Calu3 (cell line): ENCODE measurements at regions of chr3 and their contacts with region 1.

Region 1: GRCh38 chr3:174440741-174441587 is 418.2 kb upstream of the NAALADL2 start:
- DNase-seq: peak; percentile 94
- H3K4me3 Mint-ChIP-seq: peak overlapping the region; percentile 80
- H3K27ac Mint-ChIP-seq: peak overlapping the region; percentile 62
- H3K4me1 Mint-ChIP-seq: peaks cover 20% of the 10 kb centered on the region
- H3K27me3 Mint-ChIP-seq: no peaks in the 10 kb centered on the region
- CTCF ChIP-seq: peak; percentile 18

Region 2: GRCh38 chr3:174547801-174548435 is 107.0 kb after region 1 on chr3:
- CTCF ChIA-PET with region 1: interaction called, 6 read pairs
- intact Hi-C with region 1: loop called (anchors 5 kb)
- DNase-seq: no peak
- H3K4me3 Mint-ChIP-seq: no peak overlapping the region
- H3K27ac Mint-ChIP-seq: no peak overlapping the region
- H3K4me1 Mint-ChIP-seq: peaks cover 17% of the 10 kb centered on the region
- H3K27me3 Mint-ChIP-seq: no peaks in the 10 kb centered on the region
- CTCF ChIP-seq: no peak

Region 3: DNA sequence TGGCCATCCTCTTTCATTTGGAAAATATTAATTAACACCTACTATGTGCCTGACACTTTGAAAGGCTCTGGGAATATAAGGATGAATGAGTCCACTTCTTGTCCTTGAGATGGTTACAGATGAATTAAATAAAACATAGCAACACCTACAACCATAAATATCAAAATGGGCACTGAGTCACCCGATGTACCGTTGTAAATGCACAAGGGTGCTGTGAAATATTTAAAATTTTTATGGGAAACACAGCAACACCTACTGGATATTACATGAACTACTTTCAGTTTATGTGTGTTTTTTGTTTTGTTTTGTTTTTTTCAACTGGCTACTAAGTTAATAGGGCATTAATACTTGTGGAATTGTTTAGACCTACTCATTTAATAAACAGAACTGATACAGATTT is 179.2 kb after region 1 on chr3:
- CTCF ChIA-PET with region 1: no interaction called
- intact Hi-C with region 1: loop called (anchors 2 kb)
- DNase-seq: no peak
- H3K4me3 Mint-ChIP-seq: no peak overlapping the region
- H3K27ac Mint-ChIP-seq: no peak overlapping the region
- H3K4me1 Mint-ChIP-seq: no peaks in the 10 kb centered on the region
- H3K27me3 Mint-ChIP-seq: no peaks in the 10 kb centered on the region
- CTCF ChIP-seq: no peak